ENCODE measurements at regions of chr17 and their contacts with region 1.

Region 1: DNA sequence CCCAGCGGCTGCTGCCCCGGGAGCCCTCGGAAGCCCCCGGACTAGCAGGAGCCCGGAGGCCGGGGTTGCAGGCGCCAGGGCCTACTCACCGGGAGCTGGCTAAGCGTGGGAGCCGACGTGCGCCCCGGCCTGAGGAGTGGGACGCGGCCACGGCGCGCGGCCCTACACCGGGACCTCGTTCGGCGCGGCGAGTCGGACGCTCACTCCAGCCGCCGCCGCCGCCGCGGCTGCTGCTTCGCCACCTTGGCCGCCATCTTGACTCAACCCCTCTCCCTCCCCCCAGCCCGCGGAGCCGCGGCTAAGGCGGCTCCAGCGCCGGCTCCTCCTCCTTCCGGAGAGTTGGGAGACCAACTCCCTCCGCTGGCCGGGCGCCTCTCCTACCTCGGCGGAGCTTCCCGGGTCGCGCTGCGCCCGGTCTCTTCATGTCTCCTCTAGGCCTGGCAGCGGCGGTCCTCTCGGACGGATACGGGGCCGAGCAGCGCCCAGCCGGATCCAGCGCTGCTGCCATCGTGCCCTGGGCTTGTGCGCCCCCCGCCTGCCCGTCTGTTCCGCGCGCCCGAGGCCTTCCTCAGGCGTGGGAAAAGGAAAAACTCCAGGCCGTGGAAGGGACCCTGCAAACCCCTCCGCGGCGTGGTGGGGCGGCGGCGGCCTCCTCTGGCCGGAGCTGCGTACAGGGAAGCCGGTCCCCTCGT is at the start of gene NCOR1:
- DNase-seq: peak; percentile 96
- total RNA-seq, gene NCOR1: 78.1 TPM

Region 2: DNA sequence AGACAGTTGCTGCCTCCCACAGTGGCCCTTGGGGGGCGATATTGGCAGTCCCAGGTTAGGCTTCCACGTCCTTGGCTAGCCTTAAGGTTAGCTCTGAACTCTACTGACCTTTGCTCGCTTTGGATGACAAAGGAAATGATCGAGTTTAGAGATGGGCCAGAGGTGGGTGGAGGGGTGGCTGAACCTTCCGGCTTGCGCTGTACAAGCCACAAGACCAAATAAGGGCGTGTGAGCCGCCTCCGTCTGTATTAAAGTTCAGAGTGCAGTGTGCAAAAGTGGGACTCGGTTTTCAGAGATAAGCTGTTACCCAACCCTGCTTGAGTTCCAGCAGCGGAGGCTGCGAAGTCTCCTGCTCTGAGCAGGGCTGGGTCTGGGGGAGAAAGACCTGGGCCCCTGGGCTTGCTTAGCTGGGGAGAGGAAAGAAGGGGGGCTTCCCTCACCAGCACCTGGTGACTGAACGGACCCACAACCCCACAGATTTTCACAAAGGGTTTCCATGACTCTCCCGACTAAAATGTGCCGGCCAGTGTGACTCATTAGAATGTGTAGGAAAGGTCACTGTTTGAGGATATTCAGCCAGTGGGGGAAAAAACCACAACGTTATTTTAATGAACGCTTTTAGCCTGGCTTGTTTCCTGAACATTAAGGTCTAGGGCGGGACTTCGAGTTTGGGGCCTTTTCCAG is 70.7 kb after region 1 on chr17:
- intact Hi-C with region 1: loop called (anchors 5 kb)
- DNase-seq: peak; percentile 87